ENCODE measurements at regions of chr1 and their contacts with region 1.

Region 1: DNA sequence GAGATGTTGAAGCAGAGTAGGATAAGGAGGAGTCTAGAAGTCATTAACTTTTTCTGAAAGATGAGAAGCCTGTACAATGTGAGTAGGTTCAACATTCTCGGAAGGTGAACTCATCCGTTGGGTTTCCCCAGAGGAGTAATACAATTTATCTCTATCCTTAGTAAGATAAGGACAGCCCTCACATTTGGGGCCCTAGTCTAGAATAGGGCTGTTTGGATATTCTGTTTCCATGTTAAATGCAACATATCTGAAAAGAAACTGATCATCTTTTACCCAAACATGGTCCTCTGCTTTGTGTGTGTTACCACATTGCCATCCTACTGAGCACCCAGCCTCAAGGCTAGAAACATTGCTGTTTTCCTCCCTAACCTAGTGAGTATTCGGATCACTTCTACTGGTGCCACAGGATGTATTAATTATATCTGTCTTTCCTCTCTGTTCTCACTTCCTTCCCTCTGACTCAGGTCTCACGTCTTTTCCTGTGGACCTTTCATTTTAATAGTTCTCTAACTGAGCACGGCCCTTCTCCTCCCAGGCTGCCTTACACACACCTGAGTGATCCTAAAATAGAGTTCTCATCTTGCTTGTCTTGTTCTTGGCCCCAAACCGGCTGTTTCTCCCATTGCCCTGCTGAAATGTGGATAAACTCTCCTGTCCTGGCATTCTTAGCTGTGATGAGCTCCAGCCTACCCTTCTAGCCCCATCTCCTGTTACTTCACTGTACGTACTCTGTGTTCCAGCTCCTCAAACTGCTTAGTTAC is 91.7 kb downstream of the CDC14A start:
- DNase-seq: peak; percentile 22
- H3K4me3 Mint-ChIP-seq: peak overlapping the region; percentile 61
- H3K27ac Mint-ChIP-seq: peak overlapping the region; percentile 95
- H3K4me1 Mint-ChIP-seq: peaks cover 91% of the 10 kb centered on the region
- H3K27me3 Mint-ChIP-seq: no peaks in the 10 kb centered on the region

Region 2: GRCh38 chr1:100377590-100378361 is 66.2 kb before region 1 on chr1:
- intact Hi-C with region 1: loop called (anchors 1 kb)
- DNase-seq: no peak
- H3K4me3 Mint-ChIP-seq: peak overlapping the region; percentile 38
- H3K27ac Mint-ChIP-seq: peak overlapping the region; percentile 75
- H3K4me1 Mint-ChIP-seq: peaks cover 55% of the 10 kb centered on the region
- H3K27me3 Mint-ChIP-seq: peaks cover 2% of the 10 kb centered on the region

Region 3: GRCh38 chr1:100423832-100424337 is 20.1 kb before region 1 on chr1:
- intact Hi-C with region 1: loop called (anchors 1 kb)
- DNase-seq: no peak
- H3K4me3 Mint-ChIP-seq: peak overlapping the region; percentile 45
- H3K27ac Mint-ChIP-seq: peak overlapping the region; percentile 43
- H3K4me1 Mint-ChIP-seq: peaks cover 51% of the 10 kb centered on the region
- H3K27me3 Mint-ChIP-seq: peaks cover 2% of the 10 kb centered on the region

Region 4: DNA sequence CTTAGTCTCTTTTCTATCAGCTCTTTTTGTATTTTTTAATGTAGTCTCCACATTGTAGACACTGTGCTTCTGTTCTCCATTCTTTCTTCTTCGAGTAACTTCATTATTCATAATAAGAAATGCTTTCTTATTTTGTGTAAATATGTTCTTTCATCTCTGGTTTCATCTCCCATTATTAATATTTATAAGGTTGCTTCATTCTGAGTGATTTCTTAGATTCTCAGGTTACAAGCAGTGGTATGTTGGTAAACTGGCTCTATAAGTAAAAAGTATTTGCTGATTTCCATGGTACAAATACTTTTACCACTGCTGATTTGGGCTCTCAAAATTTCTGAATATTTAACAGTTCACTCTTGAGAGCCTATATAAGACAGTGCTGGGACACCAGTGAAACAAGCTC is 10.4 kb before region 1 on chr1:
- intact Hi-C with region 1: loop called (anchors 1 kb)
- DNase-seq: no peak
- H3K4me3 Mint-ChIP-seq: no peak overlapping the region
- H3K27ac Mint-ChIP-seq: no peak overlapping the region
- H3K4me1 Mint-ChIP-seq: peaks cover 47% of the 10 kb centered on the region
- H3K27me3 Mint-ChIP-seq: no peaks in the 10 kb centered on the region

Region 5: DNA sequence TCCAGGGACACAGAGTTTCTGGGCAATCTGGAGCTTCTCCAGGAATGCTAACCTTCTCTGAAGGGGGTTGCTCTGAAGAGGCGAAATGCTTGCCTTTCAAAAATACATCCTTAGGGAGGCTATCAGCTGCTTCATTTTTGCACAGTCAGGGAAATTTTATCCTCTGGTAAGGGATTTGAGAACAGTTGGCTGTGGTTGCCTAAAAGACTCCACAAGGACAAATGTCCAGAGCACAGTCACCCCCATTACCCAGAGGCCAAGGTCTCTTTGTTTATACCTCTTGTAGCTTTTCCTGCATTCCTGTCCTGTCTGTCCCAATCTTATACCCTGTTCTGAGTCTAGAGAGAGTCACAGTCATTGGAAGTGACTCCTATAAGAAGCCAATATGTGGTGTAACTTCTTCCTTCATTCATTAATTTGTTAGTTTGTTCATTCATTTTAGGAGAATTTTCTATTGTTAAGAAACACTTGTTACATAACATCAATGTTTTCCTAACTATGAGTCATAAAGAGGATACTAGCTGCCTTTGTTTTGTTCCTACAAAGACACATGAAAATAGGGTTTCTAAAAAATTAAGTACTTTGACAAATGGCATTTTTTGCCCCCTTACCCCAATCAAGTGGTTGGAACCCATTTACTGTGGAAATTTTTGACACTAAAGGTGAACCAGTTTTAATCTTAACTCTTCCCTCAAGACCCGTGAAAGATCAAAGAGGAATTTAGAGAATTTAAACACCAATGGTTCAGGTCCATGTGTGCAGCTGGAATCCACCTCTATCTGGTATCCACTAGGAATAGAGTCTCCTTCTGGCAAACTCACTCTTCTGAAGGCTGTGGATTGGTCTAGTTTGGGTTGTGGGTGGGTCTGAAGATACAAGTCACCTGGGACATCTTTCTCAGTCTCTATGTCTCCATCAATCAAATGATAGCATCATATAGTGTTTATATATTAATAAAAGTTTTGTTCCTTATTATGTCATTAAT is 141.1 kb after region 1 on chr1:
- intact Hi-C with region 1: no loop called
- DNase-seq: no peak
- H3K4me3 Mint-ChIP-seq: no peak overlapping the region
- H3K27ac Mint-ChIP-seq: no peak overlapping the region
- H3K4me1 Mint-ChIP-seq: no peaks in the 10 kb centered on the region
- H3K27me3 Mint-ChIP-seq: peaks cover 5% of the 10 kb centered on the region

Region 6: GRCh38 chr1:100941098-100941527 is 497.1 kb after region 1 on chr1:
- intact Hi-C with region 1: loop called (anchors 2 kb)
- DNase-seq: peak; percentile 17
- H3K4me3 Mint-ChIP-seq: peak overlapping the region; percentile 58
- H3K27ac Mint-ChIP-seq: peak overlapping the region; percentile 99
- H3K4me1 Mint-ChIP-seq: peaks cover 37% of the 10 kb centered on the region
- H3K27me3 Mint-ChIP-seq: peaks cover 3% of the 10 kb centered on the region